ENCODE measurements at regions of chr10 and their contacts with region 1.

Region 1: DNA sequence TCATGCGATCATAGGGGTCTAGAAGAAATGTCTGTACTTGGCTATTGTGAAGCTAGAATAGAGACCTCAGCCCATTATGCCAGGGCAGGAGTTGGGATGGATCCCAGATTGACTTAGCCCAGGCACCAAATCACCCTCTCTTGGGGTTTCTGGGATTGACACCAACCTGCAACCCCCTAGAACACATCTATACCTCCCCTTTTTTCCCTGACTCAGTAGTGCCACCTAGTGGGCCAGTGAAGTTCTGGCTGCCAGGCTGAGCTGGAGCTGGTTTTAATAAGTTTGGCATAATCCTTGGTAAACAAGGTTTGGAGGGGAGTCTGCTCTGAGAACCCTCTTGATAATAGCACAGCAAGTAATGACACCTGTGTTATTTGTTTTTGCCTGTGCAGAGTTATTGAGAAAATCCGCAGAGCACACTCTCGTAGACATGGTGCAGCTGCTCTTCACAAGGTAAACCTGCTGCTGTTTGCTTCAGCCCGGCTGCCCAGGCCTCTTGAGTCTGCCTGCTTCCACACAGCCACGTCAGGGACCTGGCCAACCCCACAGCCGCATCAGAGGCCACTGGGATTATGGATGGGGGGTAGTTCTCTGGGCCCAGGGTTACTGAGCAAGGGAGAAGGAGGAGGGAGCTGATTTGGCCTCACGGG is 43.3 kb upstream of the NFKB2 start:
- DNase-seq: peak; percentile 90
- H3K4me3 Mint-ChIP-seq: no peak overlapping the region
- H3K27ac Mint-ChIP-seq: no peak overlapping the region
- H3K4me1 Mint-ChIP-seq: peaks cover 8% of the 10 kb centered on the region
- H3K27me3 Mint-ChIP-seq: no peaks in the 10 kb centered on the region

Region 2: DNA sequence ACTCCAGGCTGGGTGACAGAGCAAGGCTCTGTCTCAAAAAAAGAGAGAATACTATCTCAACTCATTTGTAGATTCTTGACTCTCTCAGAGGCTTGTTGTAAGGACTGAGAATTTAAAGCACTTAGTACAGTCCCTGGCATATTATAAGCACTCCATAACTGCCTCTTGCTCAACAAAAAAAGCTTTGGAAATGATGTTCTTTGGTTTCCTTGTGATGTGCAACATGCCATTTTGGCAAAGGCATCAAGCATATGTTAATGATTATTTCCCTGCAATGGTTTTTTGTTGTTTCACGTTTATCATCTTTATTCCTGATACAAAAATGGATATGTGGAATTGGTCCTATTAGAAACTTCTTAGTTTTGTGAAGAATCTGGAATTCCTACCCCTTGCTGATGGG is 184.3 kb before region 1 on chr10:
- intact Hi-C with region 1: loop called (anchors 2 kb)
- DNase-seq: no peak
- H3K4me3 Mint-ChIP-seq: no peak overlapping the region
- H3K27ac Mint-ChIP-seq: no peak overlapping the region
- H3K4me1 Mint-ChIP-seq: peaks cover 8% of the 10 kb centered on the region
- H3K27me3 Mint-ChIP-seq: peaks cover 2% of the 10 kb centered on the region

Region 3: DNA sequence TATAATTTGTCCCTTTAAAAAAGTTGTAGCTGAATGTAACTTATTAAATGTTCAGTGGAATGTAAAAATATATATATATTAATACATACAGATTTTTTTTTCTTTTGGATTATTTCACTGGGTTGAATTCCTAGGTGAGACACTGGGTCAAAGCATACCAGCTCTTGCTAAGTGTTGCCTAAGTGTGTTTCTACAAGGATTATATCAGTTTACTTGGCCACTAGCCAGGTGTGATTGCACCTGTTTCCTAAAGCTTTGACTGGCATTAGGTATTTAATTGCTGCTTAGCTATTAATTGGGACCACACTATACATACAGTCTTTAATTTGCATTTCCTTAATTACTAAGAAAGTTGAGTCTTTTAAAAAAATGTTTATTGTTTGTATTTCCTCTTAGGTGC is 131.6 kb before region 1 on chr10:
- intact Hi-C with region 1: no loop called
- DNase-seq: no peak
- H3K4me3 Mint-ChIP-seq: no peak overlapping the region
- H3K27ac Mint-ChIP-seq: no peak overlapping the region
- H3K4me1 Mint-ChIP-seq: peaks cover 2% of the 10 kb centered on the region
- H3K27me3 Mint-ChIP-seq: peaks cover 35% of the 10 kb centered on the region

Region 4: DNA sequence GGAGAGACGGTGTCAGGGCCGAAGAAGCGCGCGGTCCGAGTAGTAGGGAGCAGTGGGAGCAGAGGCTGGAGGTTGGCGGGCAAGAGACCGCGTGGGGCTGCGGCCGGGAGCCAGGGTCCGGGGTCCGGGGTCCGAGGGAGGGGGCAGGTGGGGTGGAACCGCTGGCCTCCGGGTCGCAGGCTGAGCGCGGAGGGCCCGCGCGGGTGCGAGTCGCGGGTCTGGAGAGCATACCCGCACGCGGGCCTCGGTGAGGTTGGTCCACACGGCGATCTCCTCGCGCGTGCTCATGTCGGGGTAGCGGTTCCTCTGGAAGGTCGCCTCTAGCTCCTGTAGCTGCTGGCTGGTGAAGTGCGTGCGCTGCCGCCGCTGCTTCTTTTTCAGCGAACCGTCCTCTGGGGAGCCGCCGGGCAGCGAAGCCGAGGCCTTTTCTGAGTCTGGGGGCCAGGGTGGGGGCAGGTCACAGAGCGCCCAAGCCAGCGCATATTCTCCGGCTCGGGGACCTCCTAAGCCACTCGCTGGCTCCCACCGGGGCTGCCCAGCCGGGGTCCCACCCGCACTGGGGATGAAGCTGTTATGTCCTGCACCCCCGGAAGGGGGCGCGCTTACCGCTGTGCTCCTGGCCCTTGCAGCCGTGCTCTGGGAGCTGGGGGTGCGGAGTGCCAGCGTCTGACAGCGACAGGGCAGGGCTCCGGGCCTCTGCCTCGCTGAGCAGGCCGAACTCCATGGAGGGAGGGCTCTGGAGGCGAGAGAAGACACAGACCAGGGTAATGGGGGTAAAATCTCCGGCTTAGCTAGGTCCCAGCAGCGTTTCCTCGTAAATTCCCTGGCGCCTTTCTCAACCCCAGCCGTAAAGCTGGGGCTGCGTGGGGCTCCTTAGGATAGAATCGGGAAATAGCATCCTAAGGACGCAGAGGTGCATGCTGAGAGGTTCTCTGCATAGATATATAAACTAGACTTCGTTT is 120.6 kb before region 1 on chr10:
- intact Hi-C with region 1: loop called (anchors 1 kb)
- DNase-seq: peak; percentile 94
- H3K4me3 Mint-ChIP-seq: peak overlapping the region; percentile 81
- H3K27ac Mint-ChIP-seq: peak overlapping the region; percentile 51
- H3K4me1 Mint-ChIP-seq: peaks cover 10% of the 10 kb centered on the region
- H3K27me3 Mint-ChIP-seq: peaks cover 70% of the 10 kb centered on the region